CD4-positive, alpha-beta memory T cell (primary cell): ENCODE measurements at regions of chr4 and their contacts with region 1.

Region 1: DNA sequence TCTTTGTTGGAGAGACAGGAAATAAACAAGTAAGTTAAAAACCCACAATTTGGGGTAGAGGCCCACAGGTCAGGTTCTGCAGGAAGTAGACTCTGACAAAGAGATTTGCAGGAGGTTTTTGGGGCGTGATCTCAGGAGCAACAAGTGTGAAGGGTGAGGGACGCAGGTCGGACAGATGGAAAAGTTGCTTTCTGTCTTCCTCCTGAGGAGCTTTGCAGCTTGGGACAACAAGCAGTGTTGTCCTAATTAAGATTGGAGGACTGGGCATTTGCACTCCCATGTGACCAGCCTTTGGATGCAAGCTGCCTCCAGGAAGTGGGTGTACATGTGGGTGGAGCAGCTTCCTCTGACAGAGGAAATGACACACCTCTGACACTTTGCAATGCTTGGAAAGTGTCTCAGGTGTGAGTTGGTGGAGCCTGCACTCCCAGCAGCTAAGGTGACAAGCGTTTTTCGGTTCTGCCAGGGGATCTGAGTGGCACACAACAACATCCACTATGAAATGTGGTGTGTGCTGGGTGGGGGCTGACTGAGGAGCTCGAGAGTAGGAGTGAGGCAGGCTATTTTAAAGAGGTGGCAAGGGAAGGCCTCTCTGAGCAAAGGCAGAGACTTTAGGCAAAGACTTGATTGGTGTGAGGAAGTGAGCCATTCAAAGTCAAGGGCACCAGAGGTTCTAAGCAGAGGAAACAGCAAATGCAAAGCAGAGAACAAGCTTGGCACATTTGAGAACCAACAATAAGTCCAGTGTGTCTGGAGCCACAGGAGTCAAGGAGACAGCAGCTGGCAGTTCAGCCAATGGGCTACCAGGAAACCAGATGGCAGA is 339.8 kb upstream of the GATB start:
- DNase-seq: peak; percentile 91 to 95 (median 94)
- H3K4me3 ChIP-seq: peak overlapping the region; percentile 33 to 70
- H3K4me3 Mint-ChIP-seq: peak overlapping the region; percentile 76 to 92 (median 90)
- H3K27ac ChIP-seq: peak overlapping the region; percentile 78
- H3K27ac Mint-ChIP-seq: peak overlapping the region; percentile 96 to 99 (median 98)
- H3K4me1 ChIP-seq: peaks cover 95% of the 10 kb centered on the region
- H3K4me1 Mint-ChIP-seq: peaks cover 66 to 97% (median 86%) of the 10 kb centered on the region in 4 donors
- H3K27me3 ChIP-seq: no peaks in the 10 kb centered on the region
- H3K27me3 Mint-ChIP-seq: no peaks in the 10 kb centered on the region

Region 2: DNA sequence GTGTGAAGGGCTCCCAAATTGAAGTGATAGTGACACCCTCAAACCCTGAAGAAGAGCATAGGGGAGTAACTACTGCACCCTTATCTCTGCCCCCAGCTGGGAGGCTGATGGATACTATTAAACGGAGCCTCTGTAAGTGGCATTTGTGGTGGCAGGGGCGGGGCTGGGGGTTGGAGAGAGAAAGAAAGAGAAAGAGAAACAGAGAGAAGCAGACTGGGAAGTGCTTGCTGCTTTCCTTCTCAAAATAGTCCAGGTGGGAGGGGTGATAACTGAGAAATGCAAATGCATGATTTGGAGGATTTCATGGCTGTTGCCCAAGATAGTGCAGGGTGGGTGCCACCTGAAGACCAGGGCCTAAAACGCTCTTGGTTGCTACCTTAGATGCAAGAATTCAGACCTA is 86.3 kb before region 1 on chr4:
- CTCF ChIA-PET with region 1: no interaction called
- POLR2A ChIA-PET with region 1: interaction called, 12 read pairs
- intact Hi-C with region 1: loop called (anchors 5 kb)
- DNase-seq: peak in 4 of 5 donors; percentile 37 to 51 (median 45)
- H3K4me3 ChIP-seq: peak overlapping the region; percentile 4 to 18
- H3K4me3 Mint-ChIP-seq: peak overlapping the region; percentile 37 to 81 (median 76)
- H3K27ac ChIP-seq: no peak overlapping the region
- H3K27ac Mint-ChIP-seq: peak overlapping the region; percentile 35 to 93 (median 89)
- H3K4me1 ChIP-seq: peaks cover 54% of the 10 kb centered on the region
- H3K4me1 Mint-ChIP-seq: peaks cover 44 to 70% (median 58%) of the 10 kb centered on the region in 4 donors
- H3K27me3 ChIP-seq: no peaks in the 10 kb centered on the region
- H3K27me3 Mint-ChIP-seq: no peaks in the 10 kb centered on the region

Region 3: DNA sequence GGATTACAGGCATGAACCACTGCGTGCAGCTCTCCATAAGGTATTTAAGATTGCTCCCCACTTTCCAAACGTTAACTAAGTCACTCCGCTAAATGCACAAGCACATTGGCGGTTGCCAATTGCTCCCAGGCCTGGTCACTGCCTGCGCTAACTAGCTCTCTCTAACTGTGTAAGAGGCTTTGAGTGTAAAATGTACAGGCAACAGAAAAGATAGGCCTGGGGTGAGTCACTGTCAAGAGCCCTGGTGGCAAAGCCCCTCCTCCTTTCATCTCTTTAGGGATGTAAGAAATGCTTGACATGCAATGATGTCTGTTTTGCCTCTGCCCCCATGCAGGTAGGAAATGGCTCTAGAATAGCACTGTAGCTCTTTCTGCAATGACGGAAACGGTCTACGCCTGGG is 10.0 kb before region 1 on chr4:
- CTCF ChIA-PET with region 1: interaction called, 11 read pairs
- POLR2A ChIA-PET with region 1: interaction called, 29 read pairs
- intact Hi-C with region 1: no loop called
- DNase-seq: no peak
- H3K4me3 ChIP-seq: no peak overlapping the region
- H3K4me3 Mint-ChIP-seq: no peak overlapping the region
- H3K27ac ChIP-seq: no peak overlapping the region
- H3K27ac Mint-ChIP-seq: peak overlapping the region in 1 of 7 donors; percentile 90
- H3K4me1 ChIP-seq: peaks cover 31% of the 10 kb centered on the region
- H3K4me1 Mint-ChIP-seq: peaks cover 40 to 66% (median 55%) of the 10 kb centered on the region in 4 donors
- H3K27me3 ChIP-seq: no peaks in the 10 kb centered on the region
- H3K27me3 Mint-ChIP-seq: no peaks in the 10 kb centered on the region

Region 4: GRCh38 chr4:152138451-152138850 is 37.9 kb after region 1 on chr4:
- CTCF ChIA-PET with region 1: no interaction called
- POLR2A ChIA-PET with region 1: interaction called, 14 read pairs
- intact Hi-C with region 1: no loop called
- DNase-seq: peak; percentile 29 to 50 (median 41)
- H3K4me3 ChIP-seq: no peak overlapping the region
- H3K4me3 Mint-ChIP-seq: peak overlapping the region in 6 of 8 donors; percentile 17 to 53 (median 37)
- H3K27ac ChIP-seq: no peak overlapping the region
- H3K27ac Mint-ChIP-seq: peak overlapping the region in 5 of 7 donors; percentile 3 to 78 (median 26)
- H3K4me1 ChIP-seq: peaks cover 15% of the 10 kb centered on the region
- H3K4me1 Mint-ChIP-seq: peaks cover 16 to 40% (median 24%) of the 10 kb centered on the region in 4 donors
- H3K27me3 ChIP-seq: no peaks in the 10 kb centered on the region
- H3K27me3 Mint-ChIP-seq: no peaks in the 10 kb centered on the region

Region 5: DNA sequence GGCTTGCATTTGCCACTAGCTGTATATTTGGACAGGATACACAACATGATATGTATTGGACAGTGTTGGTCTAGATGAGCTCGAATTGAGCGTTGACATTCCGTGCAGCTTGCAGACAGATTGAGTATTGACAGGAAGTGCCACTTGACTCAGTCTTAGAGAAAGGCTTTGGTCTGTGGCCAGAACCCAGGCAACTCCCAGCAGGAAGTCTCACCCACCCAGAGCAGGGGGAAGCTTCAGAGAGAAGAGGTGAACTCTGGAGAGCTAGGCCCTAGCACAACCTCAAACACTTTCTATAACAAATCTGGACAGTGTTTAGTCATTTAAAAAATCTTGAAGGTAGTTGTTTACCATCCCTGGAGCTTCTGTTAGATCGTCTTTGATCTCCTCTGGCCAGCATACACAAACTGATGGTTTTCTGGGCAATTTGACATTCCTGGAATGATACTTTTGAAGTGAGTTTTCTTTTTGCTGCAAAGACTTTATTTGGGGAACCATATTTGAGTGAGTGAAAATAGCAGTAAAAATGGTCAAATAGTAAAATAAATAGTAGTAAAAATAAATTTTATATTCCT is 154.9 kb after region 1 on chr4:
- CTCF ChIA-PET with region 1: interaction called, 9 read pairs
- POLR2A ChIA-PET with region 1: interaction called, 55 read pairs
- intact Hi-C with region 1: loop called (anchors 2 kb)
- DNase-seq: peak; percentile 54 to 74 (median 60)
- H3K4me3 ChIP-seq: no peak overlapping the region
- H3K4me3 Mint-ChIP-seq: no peak overlapping the region
- H3K27ac ChIP-seq: no peak overlapping the region
- H3K27ac Mint-ChIP-seq: no peak overlapping the region
- H3K4me1 ChIP-seq: peaks cover 50% of the 10 kb centered on the region
- H3K4me1 Mint-ChIP-seq: peaks cover 0 to 19% (median 13%) of the 10 kb centered on the region in 4 donors
- H3K27me3 ChIP-seq: no peaks in the 10 kb centered on the region
- H3K27me3 Mint-ChIP-seq: no peaks in the 10 kb centered on the region

Region 6: DNA sequence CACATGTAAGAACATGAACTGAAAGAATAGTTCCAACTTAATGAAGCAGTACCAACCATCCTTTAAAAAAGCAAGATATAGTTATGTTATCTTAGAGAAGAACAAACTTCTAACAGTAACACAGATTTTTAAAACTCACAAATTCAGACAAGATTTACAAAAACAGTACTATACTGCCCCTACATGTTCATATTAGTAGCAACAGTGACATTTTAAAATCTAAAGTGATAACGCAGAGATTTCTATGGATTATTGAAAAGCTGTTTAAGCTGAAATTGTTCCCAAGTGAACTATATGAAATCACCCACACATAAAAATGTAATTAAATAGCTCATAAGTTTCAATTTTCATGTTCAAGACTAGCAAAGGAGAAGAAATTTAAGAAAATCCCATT is 269.3 kb after region 1 on chr4:
- CTCF ChIA-PET with region 1: interaction called, 3 read pairs
- POLR2A ChIA-PET with region 1: no interaction called
- intact Hi-C with region 1: loop called (anchors 5 kb)
- DNase-seq: peak in 2 of 5 donors; percentile 13 to 22
- H3K4me3 ChIP-seq: no peak overlapping the region
- H3K4me3 Mint-ChIP-seq: no peak overlapping the region
- H3K27ac ChIP-seq: no peak overlapping the region
- H3K27ac Mint-ChIP-seq: no peak overlapping the region
- H3K4me1 ChIP-seq: peaks cover 5% of the 10 kb centered on the region
- H3K4me1 Mint-ChIP-seq: peaks cover 11 to 23% (median 14%) of the 10 kb centered on the region in 4 donors
- H3K27me3 ChIP-seq: no peaks in the 10 kb centered on the region
- H3K27me3 Mint-ChIP-seq: no peaks in the 10 kb centered on the region